GM18951 (cell line): ENCODE measurements at regions of chr4 and their contacts with region 1.

Region 1: GRCh38 chr4:5933116-5933515 is 40.2 kb upstream of the CRMP1 start:
- POLR2A ChIP-seq: no peak

Region 2: GRCh38 chr4:5165420-5166369 is 767.4 kb before region 1 on chr4:
- in situ Hi-C with region 1: loop called (anchors 10 kb)
- POLR2A ChIP-seq: no peak

Region 3: GRCh38 chr4:5708449-5709206 is 224.5 kb before region 1 on chr4 and contains the start of gene EVC2:
- in situ Hi-C with region 1: no loop called
- POLR2A ChIP-seq: no peak